ENCODE measurements at regions of chr17 and their contacts with region 1.

Region 1: DNA sequence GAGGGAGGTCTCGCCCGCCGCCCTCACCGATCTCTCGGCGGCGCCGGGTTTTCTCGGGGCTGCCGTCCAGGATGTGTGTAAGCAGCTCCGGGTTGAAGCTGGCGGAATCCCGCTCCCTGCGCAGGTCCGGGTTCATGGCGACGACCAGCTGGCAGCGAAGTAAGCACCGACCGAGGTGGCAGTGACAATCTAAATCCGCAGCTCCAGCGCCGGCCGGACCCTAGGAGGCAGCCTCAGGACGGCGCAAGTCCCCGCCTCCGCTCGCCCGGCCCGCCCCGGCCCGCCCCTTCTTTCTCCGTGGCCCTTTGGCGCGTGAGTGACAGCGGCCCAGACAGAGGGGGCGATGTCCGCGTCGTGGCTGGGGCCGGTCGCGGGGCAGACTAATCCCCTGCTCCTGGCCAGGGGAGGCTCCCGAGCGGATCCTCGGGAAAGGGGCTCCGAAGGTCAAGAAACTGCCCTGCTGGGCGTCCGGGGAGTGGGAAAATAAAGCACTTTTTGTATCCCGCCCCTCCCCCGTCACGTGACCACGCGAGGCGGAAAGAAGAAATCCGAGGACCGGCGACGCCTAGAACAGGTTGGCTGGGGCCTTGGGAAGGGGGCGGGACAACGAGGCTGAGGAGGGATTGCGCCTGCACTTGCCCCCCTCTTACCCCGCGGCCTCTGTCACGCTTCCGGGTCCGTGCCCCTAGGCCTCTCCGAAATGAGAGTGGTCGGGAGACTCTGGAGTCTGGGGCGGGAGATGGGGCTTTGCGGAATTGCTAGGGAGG is at the starts of genes ACOX1 and TEN1:
- DNase-seq: peak; percentile 99
- ATAC-seq: peak; percentile 98
- total RNA-seq, gene ACOX1: 80.9 TPM
- total RNA-seq, gene TEN1: 9.4 TPM

Region 2: DNA sequence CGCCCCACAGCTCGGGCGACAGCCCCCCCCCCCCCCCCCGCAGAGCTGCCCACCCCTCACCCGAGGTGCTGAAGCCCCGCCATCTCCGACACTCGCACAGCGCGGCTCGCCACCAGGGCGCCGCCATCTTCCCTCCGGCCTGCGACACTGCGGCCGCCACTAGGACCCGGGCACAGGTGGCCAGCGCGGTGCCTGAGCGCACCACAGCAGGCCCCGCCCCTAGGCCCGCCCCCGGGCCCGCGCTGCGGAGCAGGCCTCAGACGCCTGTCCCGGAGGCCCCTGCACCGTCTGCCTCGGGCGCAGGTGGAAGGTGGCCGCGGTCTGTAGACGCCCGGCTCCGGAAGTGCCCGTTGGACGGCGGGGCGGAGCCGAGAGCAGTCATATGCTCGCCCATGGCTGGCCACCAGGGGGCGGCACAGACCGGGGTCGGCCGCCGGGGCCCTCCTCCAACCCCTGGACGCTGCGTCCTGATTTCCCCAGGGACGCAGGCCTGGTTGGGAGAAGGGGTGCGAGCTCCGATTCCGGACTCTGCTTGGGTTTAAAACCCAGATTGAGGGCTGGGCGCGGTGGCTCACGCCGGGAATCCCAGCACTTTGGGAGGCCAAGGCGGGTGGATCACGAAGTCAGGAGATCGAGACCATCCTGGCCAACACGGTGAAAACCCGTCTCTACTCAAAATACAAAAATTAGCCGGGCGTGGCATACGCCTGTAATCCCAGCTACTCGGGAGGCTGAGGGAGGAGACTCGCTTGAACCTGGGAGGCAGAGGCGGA is 74.2 kb before region 1 on chr17 and contains the start of gene MRPL38:
- intact Hi-C with region 1: loop called (anchors 1 kb)
- DNase-seq: peak; percentile 97
- ATAC-seq: peak; percentile 95
- total RNA-seq, gene MRPL38: 115 TPM

Region 3: DNA sequence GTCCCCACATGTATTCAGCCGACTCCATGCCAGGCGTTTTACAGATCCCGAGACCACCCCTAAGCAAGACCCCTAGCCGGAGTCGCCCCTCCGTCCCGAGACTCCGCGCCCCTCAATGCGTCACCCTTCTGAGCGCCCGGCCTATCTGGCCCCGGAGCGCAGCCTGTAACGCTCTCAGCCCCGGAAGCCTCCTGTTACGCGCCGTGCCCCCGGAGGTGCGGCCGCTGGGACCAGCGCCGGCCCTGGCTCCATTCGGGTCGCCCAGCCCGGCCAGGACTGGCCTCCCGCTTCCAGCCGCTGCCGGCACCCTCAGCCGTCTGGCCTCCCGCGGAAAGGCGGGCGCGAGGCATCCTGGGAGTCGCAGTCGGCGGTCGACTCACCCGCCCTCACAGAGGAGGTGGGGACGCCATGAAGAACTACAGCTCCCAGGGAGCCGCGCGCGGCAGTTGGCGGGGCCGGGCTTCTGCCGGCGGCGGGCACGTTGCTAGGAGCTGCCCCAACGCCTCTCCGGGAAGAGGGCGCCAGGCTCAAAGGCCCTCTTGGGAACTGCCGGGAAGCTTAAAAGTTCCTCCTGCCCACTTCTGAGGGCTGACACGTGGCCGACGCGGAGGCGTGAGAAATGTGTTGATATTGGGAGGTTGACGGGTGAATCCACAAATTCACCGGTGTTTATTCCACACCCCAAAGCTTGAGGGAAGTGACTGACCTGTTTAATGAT is 38.2 kb before region 1 on chr17 and contains the start of gene FBF1:
- intact Hi-C with region 1: loop called (anchors 2 kb)
- DNase-seq: peak; percentile 96
- ATAC-seq: peak; percentile 99
- total RNA-seq, gene FBF1: 3.5 TPM

Region 4: DNA sequence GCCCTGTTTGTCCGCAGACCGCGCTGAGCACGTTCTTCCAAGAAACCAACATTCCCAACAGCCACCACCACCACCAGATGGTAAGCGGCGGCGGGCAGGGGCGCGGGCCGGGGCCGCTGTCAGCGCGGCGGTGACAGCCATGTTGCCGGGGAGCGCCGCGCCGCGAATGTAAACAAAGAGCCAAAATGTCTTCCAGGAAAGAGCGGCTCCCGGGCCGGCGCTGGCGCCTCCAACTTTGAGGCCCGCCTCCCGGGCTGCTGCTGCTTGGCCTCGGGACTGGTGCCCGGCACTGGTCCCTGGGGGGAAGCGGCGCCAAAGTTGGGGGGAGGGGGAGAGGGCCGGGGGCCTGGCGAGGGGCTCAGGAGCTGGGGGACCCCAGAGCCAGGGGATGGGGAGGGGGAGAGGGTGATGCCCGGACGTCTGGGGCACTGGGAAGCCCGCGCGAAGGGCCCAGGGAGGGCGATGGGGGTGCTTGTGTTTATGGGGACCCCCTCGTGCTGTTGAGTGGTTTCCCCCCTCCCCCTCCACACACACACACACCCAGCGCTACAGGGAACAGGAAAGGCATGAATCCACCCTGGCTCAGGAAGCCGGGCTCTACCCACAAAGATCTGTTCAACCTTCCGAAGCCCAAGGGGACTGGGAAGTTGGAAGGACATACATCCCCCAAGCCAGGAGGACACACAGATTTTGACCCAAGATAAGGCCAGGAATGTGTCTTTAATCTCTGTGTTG is 286.9 kb after region 1 on chr17:
- intact Hi-C with region 1: no loop called
- DNase-seq: peak; percentile 91
- ATAC-seq: no peak

Measured in Right ventricle myocardium inferior (tissue), 1 donor.